T-cell (primary cell): ENCODE measurements at regions of chr7 and their contacts with region 1.

Region 1: DNA sequence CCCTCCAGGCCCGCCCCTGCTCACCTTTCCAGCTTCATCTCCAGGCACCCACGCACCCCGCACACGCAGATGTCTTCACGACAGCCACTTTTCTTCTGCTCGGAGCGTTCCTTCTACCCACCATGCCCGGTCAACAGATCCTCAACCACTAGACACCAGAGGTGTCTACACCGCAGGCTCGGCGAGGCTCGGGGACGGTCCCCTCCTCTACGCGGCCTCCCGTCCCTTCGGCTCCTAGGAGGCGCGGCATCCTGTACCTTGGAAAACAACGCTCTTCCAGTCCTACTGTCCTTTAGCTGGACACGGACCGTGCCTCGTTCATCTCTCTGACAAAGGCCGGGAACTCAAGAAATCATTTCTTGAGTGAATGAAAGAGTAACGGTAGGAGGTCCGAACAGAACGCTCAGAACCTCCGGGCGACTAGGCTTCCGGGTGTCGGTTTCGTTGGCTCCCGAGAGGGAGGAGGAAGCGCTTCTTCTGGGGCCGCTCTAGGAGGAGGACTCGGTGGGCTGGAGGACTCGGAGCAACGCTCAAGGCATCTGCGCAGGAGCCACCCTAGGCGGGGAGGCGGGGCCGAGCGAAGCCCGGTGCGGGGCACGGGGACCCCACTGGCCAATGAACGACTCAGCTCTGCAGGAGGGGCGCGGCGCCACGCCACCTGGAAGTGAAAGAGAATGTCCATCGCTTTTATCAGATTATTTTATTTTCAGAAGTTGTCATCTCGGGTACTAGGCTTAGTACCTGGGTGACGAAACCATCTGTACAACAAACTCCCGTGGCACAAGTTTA is 7.2 kb upstream of the FIS1 start:
- DNase-seq: peak; percentile 94 to 100 (median 99)
- ATAC-seq: peak; percentile 99 to 100 (median 100)
- H3K4me3 ChIP-seq: peak overlapping the region; percentile 89 to 93
- H3K4me3 Mint-ChIP-seq: peak overlapping the region; percentile 100
- H3K27ac ChIP-seq: peak overlapping the region; percentile 59
- H3K27ac Mint-ChIP-seq: peak overlapping the region; percentile 98 to 99
- H3K4me1 ChIP-seq: peaks cover 6 to 28% of the 10 kb centered on the region in 2 experiments
- H3K4me1 Mint-ChIP-seq: peaks cover 31 to 38% (median 38%) of the 10 kb centered on the region in 3 donors
- H3K27me3 ChIP-seq: peaks cover 0 to 9% of the 10 kb centered on the region in 2 experiments
- H3K27me3 Mint-ChIP-seq: peaks cover 0 to 4% of the 10 kb centered on the region in 2 donors

Region 2: GRCh38 chr7:101217388-101218235 is 34.5 kb before region 1 on chr7 and contains the starts of genes PLOD3 and ZNHIT1:
- CTCF ChIA-PET with region 1: interaction called in 1 of 2 experiments, 11 read pairs
- POLR2A ChIA-PET with region 1: interaction called in 1 of 2 experiments, 5 read pairs
- DNase-seq: peak; percentile 88 to 99 (median 94)
- ATAC-seq: peak; percentile 70 to 84 (median 74)
- H3K4me3 ChIP-seq: peak within 1 kb of the TSS; percentile 88 to 95
- H3K4me3 Mint-ChIP-seq: peak within 1 kb of the TSS; percentile 90 to 96 (median 95)
- H3K27ac ChIP-seq: peak within 1 kb of the TSS; percentile 77
- H3K27ac Mint-ChIP-seq: peak within 1 kb of the TSS; percentile 81 to 86
- H3K4me1 ChIP-seq: peaks cover 7 to 56% of the 10 kb centered on the region in 2 experiments
- H3K4me1 Mint-ChIP-seq: peaks cover 45 to 57% (median 51%) of the 10 kb centered on the region in 3 donors
- H3K27me3 ChIP-seq: no peaks in the 10 kb centered on the region
- H3K27me3 Mint-ChIP-seq: no peaks in the 10 kb centered on the region
- total RNA-seq, gene PLOD3: 27.7 to 74.2 (median 58.8) TPM
- total RNA-seq, gene ZNHIT1: 32.9 to 54.1 (median 50.4) TPM

Region 3: DNA sequence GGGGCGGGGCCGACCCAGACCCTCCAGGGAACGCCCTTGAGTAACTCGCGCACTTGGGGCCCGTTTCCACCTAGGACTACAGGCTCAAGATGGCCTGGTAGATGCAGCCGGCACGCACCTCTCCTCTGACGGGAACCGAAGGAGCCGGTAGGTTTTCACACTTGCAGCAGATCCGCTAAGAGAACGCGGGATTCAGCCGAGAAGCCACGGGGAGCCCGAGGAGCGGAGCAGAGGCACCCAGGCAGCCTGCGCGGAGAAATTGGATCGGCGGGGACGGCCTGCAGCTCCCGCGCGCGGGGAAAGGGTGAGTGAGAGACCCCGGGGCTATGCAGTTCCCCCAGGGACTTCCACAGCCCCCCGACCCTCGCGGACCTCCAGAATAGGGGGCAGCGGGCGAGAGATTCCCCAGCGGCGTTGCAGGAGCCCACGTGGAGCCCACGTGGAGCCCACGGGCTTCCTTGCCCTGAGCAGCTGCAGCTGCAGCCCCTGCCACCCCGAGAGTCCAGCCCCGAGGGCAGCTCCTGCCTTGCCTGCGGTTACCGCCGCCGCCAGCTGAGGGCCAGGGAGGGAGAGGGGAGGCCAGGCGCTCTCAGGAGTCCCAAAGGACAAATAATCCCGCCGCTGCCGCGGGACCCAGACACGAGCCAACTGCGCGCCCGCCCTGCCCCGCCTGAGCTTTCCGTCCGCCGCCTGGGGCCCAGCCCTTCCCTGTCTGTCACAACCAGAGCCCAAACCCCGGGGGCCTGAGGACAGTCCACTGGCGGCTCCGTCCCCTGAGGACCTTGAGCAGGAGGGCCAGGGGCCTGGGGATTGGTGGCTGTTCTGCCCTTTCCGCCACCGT is 56.4 kb after region 1 on chr7:
- CTCF ChIA-PET with region 1: no interaction called
- POLR2A ChIA-PET with region 1: interaction called in 1 of 2 experiments, 11 read pairs
- DNase-seq: peak in 6 of 35 experiments; percentile 13 to 29 (median 18)
- ATAC-seq: peak; percentile 55 to 75 (median 70)
- H3K4me3 ChIP-seq: peak overlapping the region; percentile 41 to 64
- H3K4me3 Mint-ChIP-seq: peak overlapping the region; percentile 80 to 85 (median 83)
- H3K27ac ChIP-seq: no peak overlapping the region
- H3K27ac Mint-ChIP-seq: peak overlapping the region; percentile 23 to 39
- H3K4me1 ChIP-seq: peaks cover 0 to 12% of the 10 kb centered on the region in 2 experiments
- H3K4me1 Mint-ChIP-seq: peaks cover 0 to 6% (median 5%) of the 10 kb centered on the region in 3 donors
- H3K27me3 ChIP-seq: peaks cover 0 to 67% of the 10 kb centered on the region in 2 experiments
- H3K27me3 Mint-ChIP-seq: peaks cover 34 to 47% of the 10 kb centered on the region in 2 donors

Region 4: DNA sequence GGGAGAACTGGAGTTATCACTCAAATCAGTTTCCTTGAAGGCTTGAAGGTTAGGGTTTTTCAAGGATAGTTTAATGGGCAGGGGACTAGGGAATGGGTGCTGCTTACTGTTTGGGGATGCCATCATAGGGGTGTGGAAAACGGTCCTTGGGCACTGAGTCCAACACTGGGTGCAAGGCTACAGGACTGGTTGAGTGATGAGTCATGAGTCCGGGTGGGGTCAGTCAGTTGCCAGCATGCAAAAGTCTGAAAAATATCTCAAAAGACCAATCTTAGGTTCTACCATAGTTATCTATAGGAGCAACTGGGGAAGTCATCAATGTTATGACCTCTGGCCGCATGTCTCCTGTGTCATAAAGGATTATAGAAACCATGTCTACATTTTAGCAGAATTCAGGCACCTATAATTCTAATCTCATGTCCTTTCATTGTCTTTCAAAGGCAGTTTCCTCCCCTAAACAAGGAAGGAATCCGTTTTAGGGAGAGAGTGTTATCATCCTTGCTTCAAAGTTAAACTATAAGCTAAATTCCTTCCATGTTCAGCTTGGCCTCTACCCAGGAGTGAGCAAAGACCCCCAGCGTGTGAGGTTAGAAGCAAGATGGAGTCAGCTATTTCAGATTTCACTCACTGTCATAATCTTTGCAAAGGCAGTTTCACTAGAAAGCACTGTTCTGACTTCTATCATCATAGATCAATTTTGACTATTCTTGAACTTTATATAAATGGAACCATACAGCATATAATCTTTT is 205.1 kb after region 1 on chr7:
- CTCF ChIA-PET with region 1: no interaction called
- POLR2A ChIA-PET with region 1: no interaction called
- DNase-seq: no peak
- ATAC-seq: no peak
- H3K4me3 ChIP-seq: no peak overlapping the region
- H3K4me3 Mint-ChIP-seq: no peak overlapping the region
- H3K27ac ChIP-seq: no peak overlapping the region
- H3K27ac Mint-ChIP-seq: no peak overlapping the region
- H3K4me1 ChIP-seq: no peaks in the 10 kb centered on the region
- H3K4me1 Mint-ChIP-seq: no peaks in the 10 kb centered on the region
- H3K27me3 ChIP-seq: peaks cover 0 to 4% of the 10 kb centered on the region in 2 experiments
- H3K27me3 Mint-ChIP-seq: no peaks in the 10 kb centered on the region